ENCODE measurements at regions of chr6 and their contacts with region 1.

Region 1: GRCh38 chr6:157667211-157668008 is 155.6 kb upstream of the SNX9 start:
- H3K4me3 ChIP-seq: no peak overlapping the region
- H3K27ac ChIP-seq: no peak overlapping the region
- H3K4me1 ChIP-seq: peaks cover 3% of the 10 kb centered on the region
- CTCF ChIP-seq: peak; percentile 86

Region 2: GRCh38 chr6:157314705-157315321 is 352.6 kb before region 1 on chr6:
- CTCF ChIA-PET with region 1: interaction called, 39 read pairs
- POLR2A ChIA-PET with region 1: no interaction called
- H3K4me3 ChIP-seq: no peak overlapping the region
- H3K27ac ChIP-seq: no peak overlapping the region
- H3K4me1 ChIP-seq: peaks cover 2% of the 10 kb centered on the region; the same call in 1 of the 2 replicates
- CTCF ChIP-seq: peak; percentile 77

Region 3: DNA sequence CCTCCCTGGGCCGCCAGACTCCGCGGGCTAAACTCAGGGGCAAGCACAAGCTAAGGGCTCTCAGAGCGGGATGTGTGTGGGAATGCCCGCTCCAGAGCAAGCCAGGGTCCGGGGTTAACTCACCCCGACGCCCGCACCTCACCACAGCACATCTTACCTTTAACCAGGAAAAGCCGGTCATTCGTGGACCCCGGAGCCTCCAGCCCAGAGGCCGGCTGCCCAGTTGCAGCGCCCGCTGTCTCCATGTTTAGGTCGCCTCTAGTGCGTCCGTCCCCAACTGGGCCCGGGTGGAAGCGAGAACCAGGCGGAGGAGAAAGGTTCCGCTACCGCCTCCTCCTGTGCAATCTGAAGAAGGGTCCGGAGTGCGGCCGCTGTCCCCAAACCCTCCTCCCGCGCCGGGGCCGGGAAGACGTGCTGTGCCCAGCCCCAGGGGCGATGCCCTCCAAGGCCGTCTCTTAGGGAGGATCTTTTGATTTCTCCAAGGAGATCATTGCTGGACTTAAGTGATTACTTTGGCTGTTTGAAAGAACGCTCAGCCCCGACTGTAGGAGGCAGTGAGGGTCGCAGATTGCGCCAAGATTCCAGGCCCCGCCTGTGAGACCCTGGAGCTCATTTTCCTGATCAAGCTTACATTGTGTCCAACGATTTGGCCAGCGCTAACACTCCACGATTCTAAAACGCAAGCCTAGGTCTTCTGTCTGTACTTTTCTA is 344.0 kb before region 1 on chr6 and contains the start of gene TMEM242:
- CTCF ChIA-PET with region 1: interaction called, 31 read pairs
- POLR2A ChIA-PET with region 1: interaction called, 4 read pairs
- H3K4me3 ChIP-seq: peak within 1 kb of the TSS; percentile 78
- H3K27ac ChIP-seq: peak within 1 kb of the TSS; percentile 56
- H3K4me1 ChIP-seq: no peaks in the 10 kb centered on the region
- CTCF ChIP-seq: peak; percentile 72

Region 4: GRCh38 chr6:157491571-157492232 is 175.7 kb before region 1 on chr6:
- CTCF ChIA-PET with region 1: no interaction called
- POLR2A ChIA-PET with region 1: no interaction called
- H3K4me3 ChIP-seq: no peak overlapping the region
- H3K27ac ChIP-seq: no peak overlapping the region
- H3K4me1 ChIP-seq: peaks cover 20% of the 10 kb centered on the region
- CTCF ChIP-seq: no peak

Region 5: DNA sequence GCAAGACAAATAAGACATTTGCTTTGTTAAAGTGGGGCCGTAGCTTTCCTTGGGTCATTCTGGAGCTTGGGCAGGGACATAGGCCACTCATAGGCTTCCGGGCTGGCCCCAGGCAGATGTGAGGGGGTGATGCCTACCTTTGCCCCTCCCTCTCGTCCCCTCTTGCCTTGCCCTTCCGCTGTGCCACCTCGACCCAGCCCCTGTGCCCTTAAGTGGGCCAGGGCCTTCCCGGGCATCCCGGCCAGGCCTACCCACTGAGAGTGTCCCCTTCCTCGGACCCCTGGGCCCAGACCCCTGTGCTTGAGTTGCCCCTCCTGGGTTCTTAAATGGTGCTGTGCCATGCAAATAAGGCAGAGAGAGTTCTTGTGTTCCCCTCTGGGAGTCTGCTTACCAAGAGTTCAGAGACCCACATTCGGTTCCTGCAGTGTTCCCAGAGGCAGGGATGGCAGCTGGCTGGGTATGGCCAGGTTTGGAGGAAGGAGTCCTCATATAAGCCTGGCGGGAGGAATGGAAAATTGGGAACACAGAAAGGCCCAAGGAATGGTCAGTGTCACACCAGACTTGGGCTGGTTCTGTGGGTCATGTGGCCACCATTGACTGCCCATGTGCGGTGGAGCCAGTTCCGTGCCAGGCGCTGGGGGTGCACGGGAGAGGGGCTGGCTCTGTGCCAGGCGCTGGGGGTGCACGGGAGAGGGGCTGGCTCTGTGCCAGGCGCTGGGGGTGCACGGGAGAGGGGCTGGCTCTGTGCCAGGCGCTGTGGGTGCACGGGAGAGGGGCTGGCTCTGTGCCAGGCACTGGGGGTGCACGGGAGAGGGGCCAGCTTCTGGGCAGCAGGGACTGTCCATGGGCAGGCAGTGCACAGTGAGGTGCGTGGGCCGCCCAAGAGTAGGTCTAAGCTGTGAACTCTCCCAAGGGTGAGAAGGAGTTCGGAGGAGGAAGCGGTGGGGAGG is 17.8 kb before region 1 on chr6:
- CTCF ChIA-PET with region 1: interaction called, 66 read pairs
- POLR2A ChIA-PET with region 1: no interaction called
- H3K4me3 ChIP-seq: no peak overlapping the region
- H3K27ac ChIP-seq: no peak overlapping the region
- H3K4me1 ChIP-seq: peaks cover 13% of the 10 kb centered on the region; the same call in 1 of the 2 replicates
- CTCF ChIP-seq: no peak

Region 6: DNA sequence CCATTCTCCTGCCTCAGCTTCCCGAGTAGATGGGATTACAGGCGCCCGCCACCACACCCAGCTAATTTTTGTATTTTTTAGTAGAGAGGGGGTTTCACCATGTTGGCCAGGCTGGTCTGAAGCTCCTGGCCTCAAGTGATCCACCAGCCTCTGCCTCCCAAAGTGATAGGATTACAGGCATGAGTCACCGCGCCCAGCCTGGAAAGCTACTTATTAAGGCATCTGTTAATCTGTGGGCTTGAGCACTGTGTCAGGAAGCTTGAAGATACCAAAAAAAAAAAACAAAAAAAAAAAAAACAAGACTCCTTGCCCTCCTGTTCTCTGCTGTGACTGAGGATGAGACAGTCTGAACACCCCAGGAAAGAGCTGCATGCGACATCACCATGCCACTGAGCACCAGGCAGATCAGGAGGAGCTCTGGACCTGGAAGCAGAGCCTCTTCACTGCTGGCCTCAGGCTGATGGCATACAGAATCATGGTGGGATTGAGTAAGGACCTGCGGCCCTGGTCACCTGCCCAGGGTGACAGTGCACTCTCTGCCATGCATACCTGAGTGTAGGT is 10.9 kb before region 1 on chr6:
- CTCF ChIA-PET with region 1: interaction called, 66 read pairs
- POLR2A ChIA-PET with region 1: no interaction called
- H3K4me3 ChIP-seq: no peak overlapping the region
- H3K27ac ChIP-seq: no peak overlapping the region
- H3K4me1 ChIP-seq: no peaks in the 10 kb centered on the region
- CTCF ChIP-seq: no peak

Region 7: DNA sequence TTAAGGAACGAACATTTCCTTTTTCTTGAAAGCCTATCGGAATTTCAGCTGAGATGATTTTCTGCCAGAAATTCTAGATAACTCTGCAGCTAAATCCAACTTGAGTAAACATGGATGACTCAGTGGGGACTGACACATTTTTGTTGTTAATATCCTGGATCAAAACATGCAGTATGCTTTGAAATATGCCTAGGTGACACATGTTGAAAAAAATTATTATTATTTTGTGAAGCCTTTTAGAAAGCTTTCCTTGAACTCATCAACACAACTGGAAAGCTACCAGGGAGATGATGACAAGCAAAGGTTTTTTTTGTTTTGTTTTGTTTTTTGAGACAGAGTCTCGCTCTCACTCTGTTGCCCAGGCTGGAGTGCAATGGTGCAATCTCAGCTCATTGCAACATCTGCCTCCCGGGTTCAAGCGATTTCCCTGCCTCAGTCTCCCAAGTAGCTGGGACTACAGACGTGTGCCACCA is 15.6 kb after region 1 on chr6:
- CTCF ChIA-PET with region 1: interaction called, 21 read pairs
- POLR2A ChIA-PET with region 1: no interaction called
- H3K4me3 ChIP-seq: no peak overlapping the region
- H3K27ac ChIP-seq: no peak overlapping the region
- H3K4me1 ChIP-seq: no peaks in the 10 kb centered on the region
- CTCF ChIP-seq: no peak

Region 8: DNA sequence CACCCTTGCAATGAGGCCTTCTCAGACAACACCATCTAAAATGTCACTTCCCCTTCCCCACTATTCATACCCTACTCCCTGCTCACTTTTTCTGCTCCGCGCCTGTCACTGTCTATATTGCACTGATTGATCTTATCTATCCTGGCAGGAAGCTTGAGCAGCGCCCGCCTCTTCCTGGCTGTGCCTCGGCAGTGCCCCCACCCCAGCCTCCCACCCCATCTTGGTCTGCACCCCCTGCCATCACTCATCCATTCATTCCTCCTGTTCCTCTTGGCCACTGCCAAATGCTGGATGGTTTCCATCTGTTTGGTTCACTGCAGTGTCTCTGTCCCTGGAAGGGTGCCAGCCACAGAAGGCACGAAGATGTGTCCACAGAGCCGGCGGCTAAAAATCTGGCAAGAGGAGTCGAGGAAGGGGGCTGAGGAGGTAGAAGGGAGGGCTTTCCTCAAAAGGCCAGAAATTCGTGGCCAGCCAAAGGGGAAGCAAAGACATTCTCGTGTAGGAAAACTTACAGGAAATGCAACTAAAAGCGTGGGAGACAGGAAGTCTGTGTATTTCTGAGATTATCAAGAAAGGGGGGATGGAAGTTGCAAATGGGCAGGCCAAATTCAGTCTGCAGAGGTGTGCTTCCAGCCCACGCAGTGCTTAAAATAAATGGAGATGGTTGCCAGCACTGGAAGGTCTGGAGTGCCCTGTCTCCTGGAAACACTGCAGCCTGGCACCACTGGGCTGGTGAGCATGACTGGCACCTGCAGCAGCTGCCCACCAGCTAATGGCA is 341.9 kb after region 1 on chr6:
- CTCF ChIA-PET with region 1: no interaction called
- POLR2A ChIA-PET with region 1: no interaction called
- H3K4me3 ChIP-seq: no peak overlapping the region
- H3K27ac ChIP-seq: no peak overlapping the region
- H3K4me1 ChIP-seq: peaks cover 6% of the 10 kb centered on the region
- CTCF ChIP-seq: no peak

Measured in HEK293 (cell line).